ENCODE measurements at regions of chr19 and their contacts with region 1.

Region 1: DNA sequence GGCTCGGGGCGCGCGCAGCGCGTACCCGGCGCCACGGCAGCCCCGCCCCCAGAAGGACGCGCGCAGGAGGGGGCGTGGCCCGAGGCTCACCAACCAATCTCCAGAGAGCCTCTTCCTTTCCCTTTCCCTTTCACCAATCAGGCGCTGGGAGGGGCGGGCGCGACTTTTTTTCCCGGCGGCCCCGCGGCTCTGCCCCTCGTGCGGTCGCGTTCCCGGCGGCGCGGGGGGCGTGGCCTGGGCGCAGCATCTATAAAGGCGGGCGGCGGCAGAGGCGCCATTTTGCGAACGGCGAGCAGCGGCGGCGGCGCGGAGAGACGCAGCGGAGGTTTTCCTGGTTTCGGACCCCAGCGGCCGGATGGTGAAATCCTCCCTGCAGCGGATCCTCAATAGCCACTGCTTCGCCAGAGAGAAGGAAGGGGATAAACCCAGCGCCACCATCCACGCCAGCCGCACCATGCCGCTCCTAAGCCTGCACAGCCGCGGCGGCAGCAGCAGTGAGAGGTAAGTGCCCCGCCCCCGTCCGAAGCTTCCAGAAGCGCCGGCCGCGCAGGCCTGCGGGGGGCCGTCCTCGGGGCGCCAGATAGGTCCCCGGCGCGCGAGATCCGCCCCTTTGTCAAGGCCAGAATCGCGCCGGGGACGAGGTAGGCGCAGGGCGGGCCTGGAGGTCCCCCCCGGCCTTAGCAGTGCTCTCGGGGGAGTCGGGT is 12.6 kb downstream of the PEAK3 start:
- DNase-seq: peak; percentile 99
- H3K4me3 Mint-ChIP-seq: peak overlapping the region; percentile 91
- H3K27ac Mint-ChIP-seq: peak overlapping the region; percentile 88
- H3K4me1 Mint-ChIP-seq: peaks cover 23% of the 10 kb centered on the region
- H3K27me3 Mint-ChIP-seq: peaks cover 5% of the 10 kb centered on the region

Region 2: GRCh38 chr19:2253106-2254053 is 16.0 kb before region 1 on chr19:
- intact Hi-C with region 1: loop called (anchors 1 kb)
- DNase-seq: no peak
- H3K4me3 Mint-ChIP-seq: peak overlapping the region; percentile 15
- H3K27ac Mint-ChIP-seq: no peak overlapping the region
- H3K4me1 Mint-ChIP-seq: peaks cover 6% of the 10 kb centered on the region
- H3K27me3 Mint-ChIP-seq: peaks cover 10% of the 10 kb centered on the region

Region 3: DNA sequence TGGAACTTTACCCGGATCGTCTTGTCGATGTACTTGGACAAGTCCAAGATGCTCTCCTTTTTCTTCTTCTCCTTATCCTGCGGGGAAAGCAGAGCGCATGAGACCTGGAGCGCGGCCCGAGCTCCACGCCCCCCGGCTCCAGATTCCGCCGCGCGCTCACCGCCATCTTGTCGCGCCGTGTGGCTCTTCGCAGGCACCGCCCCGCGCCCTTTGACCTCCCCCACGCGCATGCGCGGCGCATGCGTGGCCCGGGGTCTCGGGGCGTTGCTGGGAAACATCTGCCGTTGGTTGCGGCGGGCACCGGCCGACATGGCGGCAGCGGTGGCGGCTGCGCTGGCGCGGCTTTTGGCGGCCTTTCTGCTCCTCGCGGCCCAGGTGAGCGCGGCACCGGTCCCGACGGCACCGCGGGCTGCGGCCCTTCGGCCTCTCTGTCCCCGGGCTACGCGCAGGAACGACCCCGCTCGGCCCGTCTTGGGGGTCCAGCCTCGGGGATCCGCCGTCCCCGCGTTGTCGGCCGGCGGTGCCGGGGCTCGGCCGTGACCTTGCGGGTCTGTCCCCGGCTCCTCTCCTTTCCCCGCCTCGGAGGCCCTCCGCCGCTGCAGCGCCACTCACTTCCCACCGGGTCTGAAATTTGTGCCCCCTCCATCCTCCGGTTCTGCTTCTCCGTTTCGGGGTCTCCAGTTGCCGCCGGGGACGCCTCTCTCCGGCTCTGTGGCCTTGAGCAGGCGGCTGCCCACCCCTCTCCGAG is 59.2 kb after region 1 on chr19 and contains the starts of genes LSM7 and SPPL2B:
- intact Hi-C with region 1: loop called (anchors 2 kb)
- DNase-seq: peak; percentile 91
- H3K4me3 Mint-ChIP-seq: peak within 1 kb of the TSS; percentile 100
- H3K27ac Mint-ChIP-seq: peak within 1 kb of the TSS; percentile 100
- H3K4me1 Mint-ChIP-seq: peaks cover 63% of the 10 kb centered on the region
- H3K27me3 Mint-ChIP-seq: no peaks in the 10 kb centered on the region
- total RNA-seq, gene LSM7: 180 and 193 TPM in 2 replicates
- total RNA-seq, gene SPPL2B: 71.2 and 71.4 TPM in 2 replicates

Region 4: DNA sequence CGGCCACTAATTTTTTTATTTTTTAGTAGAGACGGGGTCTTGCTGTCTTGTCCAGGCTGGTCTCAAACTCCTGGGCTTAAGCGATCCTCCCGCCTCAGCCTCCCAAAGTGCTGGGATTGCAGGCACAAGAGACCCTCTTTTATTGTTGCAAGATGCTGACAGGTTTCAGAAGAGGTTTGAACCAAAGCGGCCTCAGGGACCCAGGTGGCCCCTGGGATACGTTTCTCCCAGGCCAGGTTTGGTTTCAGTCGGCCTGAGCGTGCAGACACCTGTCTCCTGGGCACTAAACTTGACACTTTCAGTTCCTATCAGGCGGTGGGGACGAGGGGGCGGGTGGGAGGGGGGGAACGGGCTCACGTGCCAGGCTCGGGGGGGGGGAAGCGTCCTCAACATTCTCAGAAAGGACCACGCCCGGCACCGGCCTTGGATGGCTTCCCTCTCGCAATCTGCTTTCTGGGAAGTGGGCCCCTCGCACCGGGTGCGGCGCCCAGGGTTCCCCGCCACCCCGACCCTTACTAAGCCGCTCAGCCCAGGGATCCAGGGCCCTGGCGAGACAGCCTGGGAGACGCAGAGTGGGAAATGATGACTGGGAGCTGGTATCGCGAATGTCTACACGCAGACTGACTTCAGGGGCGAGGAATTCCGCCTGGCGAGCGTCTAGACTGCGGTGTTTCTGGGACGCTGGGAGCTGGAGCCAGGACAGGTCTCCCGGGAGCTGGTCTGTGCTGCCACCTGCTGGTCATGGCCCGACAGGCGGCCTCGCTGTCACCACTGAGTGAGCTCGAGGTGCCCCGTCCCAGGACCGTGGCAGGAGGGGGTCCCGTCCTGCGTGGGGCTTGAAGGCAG is 341.5 kb after region 1 on chr19:
- intact Hi-C with region 1: loop called (anchors 10 kb)
- DNase-seq: peak; percentile 79
- H3K4me3 Mint-ChIP-seq: peak overlapping the region; percentile 85
- H3K27ac Mint-ChIP-seq: peak overlapping the region; percentile 75
- H3K4me1 Mint-ChIP-seq: peaks cover 39% of the 10 kb centered on the region
- H3K27me3 Mint-ChIP-seq: peaks cover 12% of the 10 kb centered on the region